CD4-positive, alpha-beta memory T cell (primary cell): ENCODE measurements at regions of chr3 and their contacts with region 1.

Region 1: GRCh38 chr3:88058591-88059368 is at the starts of genes CGGBP1 and ZNF654:
- DNase-seq: peak; percentile 99 to 100 (median 99)
- H3K4me3 ChIP-seq: peak within 1 kb of the TSS; percentile 73 to 92
- H3K4me3 Mint-ChIP-seq: peak within 1 kb of the TSS; percentile 94 to 99 (median 98)
- H3K27ac ChIP-seq: peak within 1 kb of the TSS; percentile 75
- H3K27ac Mint-ChIP-seq: peak within 1 kb of the TSS; percentile 95 to 99 (median 98)
- H3K4me1 ChIP-seq: peaks cover 66% of the 10 kb centered on the region
- H3K4me1 Mint-ChIP-seq: peaks cover 36 to 84% (median 54%) of the 10 kb centered on the region in 4 donors
- H3K27me3 ChIP-seq: no peaks in the 10 kb centered on the region
- H3K27me3 Mint-ChIP-seq: no peaks in the 10 kb centered on the region
- total RNA-seq, gene CGGBP1: 142 to 159 TPM
- total RNA-seq, gene ZNF654: 26.8 to 30.3 TPM

Region 2: DNA sequence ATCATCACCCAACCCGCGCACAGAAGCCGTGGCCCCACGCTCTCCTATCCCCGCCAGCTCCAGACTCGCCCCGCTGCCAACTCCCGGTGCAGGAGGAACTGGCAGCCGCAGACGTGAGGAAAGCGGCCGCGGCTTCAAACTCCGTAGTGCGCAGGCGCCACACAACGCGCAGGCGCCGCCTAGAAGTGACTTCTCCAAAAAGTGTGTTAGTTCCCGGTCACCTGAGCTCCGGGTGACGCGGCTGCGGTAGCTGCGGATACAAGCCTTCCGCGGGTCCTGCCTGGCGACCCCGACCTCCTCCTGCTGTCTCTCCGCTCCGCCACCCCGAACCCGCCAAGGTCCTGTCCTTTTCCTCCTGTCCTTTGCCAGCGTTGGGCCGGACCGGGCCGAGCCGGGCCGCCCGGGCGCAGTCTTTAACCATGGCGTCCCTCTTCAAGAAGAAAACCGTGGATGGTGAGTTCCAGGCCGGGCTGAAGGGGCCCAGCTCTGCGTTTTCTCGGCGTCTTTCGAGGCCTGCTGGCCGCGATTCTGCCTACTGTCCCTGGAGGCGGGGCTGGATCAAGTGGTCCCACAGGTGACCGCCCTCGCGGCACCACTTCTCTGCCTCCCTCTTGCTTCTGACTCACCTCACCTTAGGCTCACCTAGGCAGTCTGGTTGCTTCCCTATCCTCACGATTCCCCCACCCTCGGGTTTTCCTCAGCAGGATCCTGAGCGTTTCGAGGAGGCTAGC is 831.5 kb before region 1 on chr3 and contains the start of gene CHMP2B:
- CTCF ChIA-PET with region 1: no interaction called
- POLR2A ChIA-PET with region 1: interaction called, 16 read pairs
- intact Hi-C with region 1: loop called (anchors 1 kb)
- DNase-seq: peak; percentile 90 to 92 (median 91)
- H3K4me3 ChIP-seq: peak within 1 kb of the TSS; percentile 71 to 92
- H3K4me3 Mint-ChIP-seq: peak within 1 kb of the TSS; percentile 97 to 99 (median 98)
- H3K27ac ChIP-seq: peak within 1 kb of the TSS; percentile 86
- H3K27ac Mint-ChIP-seq: peak within 1 kb of the TSS; percentile 96 to 99 (median 98)
- H3K4me1 ChIP-seq: peaks cover 35% of the 10 kb centered on the region
- H3K4me1 Mint-ChIP-seq: peaks cover 33 to 56% (median 38%) of the 10 kb centered on the region in 4 donors
- H3K27me3 ChIP-seq: no peaks in the 10 kb centered on the region
- H3K27me3 Mint-ChIP-seq: peaks cover 6 to 7% of the 10 kb centered on the region in 2 donors
- total RNA-seq, gene CHMP2B: 25.9 to 30.8 TPM

Region 3: GRCh38 chr3:88031642-88032077 is 27.1 kb before region 1 on chr3:
- CTCF ChIA-PET with region 1: interaction called, 5 read pairs
- POLR2A ChIA-PET with region 1: interaction called, 55 read pairs
- intact Hi-C with region 1: loop called (anchors 1 kb)
- DNase-seq: peak in 4 of 5 donors; percentile 49 to 62 (median 58)
- H3K4me3 ChIP-seq: peak overlapping the region; percentile 52 to 54
- H3K4me3 Mint-ChIP-seq: peak overlapping the region; percentile 78 to 92 (median 90)
- H3K27ac ChIP-seq: peak overlapping the region; percentile 61
- H3K27ac Mint-ChIP-seq: peak overlapping the region; percentile 80 to 98 (median 96)
- H3K4me1 ChIP-seq: peaks cover 19% of the 10 kb centered on the region
- H3K4me1 Mint-ChIP-seq: peaks cover 22 to 41% (median 32%) of the 10 kb centered on the region in 4 donors
- H3K27me3 ChIP-seq: no peaks in the 10 kb centered on the region
- H3K27me3 Mint-ChIP-seq: no peaks in the 10 kb centered on the region

Region 4: DNA sequence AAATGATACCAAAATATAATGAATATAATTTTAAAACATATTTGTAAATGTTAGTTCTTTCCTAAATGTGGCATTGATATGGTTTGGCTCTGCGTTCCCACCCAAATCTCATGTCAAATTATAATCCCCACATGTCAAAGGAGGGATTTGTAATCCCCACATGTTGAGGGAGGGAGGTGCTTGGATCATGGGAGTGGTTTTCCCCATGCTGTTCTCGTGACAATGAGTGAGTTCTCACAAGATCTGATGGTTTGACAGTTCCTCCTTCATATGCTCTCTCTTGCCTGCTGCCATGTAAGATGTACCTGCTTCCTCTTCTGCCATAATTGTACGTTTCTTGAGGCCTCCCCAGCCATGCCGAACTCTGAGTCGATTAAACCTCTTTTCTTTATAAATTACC is 12.0 kb before region 1 on chr3:
- CTCF ChIA-PET with region 1: no interaction called
- POLR2A ChIA-PET with region 1: interaction called, 4 read pairs
- intact Hi-C with region 1: loop called (anchors 1 kb)
- DNase-seq: no peak
- H3K4me3 ChIP-seq: no peak overlapping the region
- H3K4me3 Mint-ChIP-seq: peak overlapping the region in 1 of 8 donors; percentile 70
- H3K27ac ChIP-seq: no peak overlapping the region
- H3K27ac Mint-ChIP-seq: peak overlapping the region in 1 of 7 donors; percentile 79
- H3K4me1 ChIP-seq: no peaks in the 10 kb centered on the region
- H3K4me1 Mint-ChIP-seq: peaks cover 5 to 17% (median 9%) of the 10 kb centered on the region in 4 donors
- H3K27me3 ChIP-seq: no peaks in the 10 kb centered on the region
- H3K27me3 Mint-ChIP-seq: no peaks in the 10 kb centered on the region

Region 5: GRCh38 chr3:88149509-88150362 is 91.0 kb after region 1 on chr3 and contains the start of gene C3orf38:
- CTCF ChIA-PET with region 1: no interaction called
- POLR2A ChIA-PET with region 1: interaction called, 103 read pairs
- intact Hi-C with region 1: loop called (anchors 1 kb)
- DNase-seq: peak; percentile 83 to 86 (median 85)
- H3K4me3 ChIP-seq: peak within 1 kb of the TSS; percentile 96 to 99
- H3K4me3 Mint-ChIP-seq: peak within 1 kb of the TSS; percentile 96 to 99 (median 98)
- H3K27ac ChIP-seq: peak within 1 kb of the TSS; percentile 90
- H3K27ac Mint-ChIP-seq: peak within 1 kb of the TSS; percentile 95 to 99 (median 98)
- H3K4me1 ChIP-seq: peaks cover 36% of the 10 kb centered on the region
- H3K4me1 Mint-ChIP-seq: peaks cover 15 to 43% (median 26%) of the 10 kb centered on the region in 4 donors
- H3K27me3 ChIP-seq: no peaks in the 10 kb centered on the region
- H3K27me3 Mint-ChIP-seq: no peaks in the 10 kb centered on the region
- total RNA-seq, gene C3orf38: 36.5 to 38.5 TPM